ENCODE measurements at regions of chr6 and their contacts with region 1.

Region 1: DNA sequence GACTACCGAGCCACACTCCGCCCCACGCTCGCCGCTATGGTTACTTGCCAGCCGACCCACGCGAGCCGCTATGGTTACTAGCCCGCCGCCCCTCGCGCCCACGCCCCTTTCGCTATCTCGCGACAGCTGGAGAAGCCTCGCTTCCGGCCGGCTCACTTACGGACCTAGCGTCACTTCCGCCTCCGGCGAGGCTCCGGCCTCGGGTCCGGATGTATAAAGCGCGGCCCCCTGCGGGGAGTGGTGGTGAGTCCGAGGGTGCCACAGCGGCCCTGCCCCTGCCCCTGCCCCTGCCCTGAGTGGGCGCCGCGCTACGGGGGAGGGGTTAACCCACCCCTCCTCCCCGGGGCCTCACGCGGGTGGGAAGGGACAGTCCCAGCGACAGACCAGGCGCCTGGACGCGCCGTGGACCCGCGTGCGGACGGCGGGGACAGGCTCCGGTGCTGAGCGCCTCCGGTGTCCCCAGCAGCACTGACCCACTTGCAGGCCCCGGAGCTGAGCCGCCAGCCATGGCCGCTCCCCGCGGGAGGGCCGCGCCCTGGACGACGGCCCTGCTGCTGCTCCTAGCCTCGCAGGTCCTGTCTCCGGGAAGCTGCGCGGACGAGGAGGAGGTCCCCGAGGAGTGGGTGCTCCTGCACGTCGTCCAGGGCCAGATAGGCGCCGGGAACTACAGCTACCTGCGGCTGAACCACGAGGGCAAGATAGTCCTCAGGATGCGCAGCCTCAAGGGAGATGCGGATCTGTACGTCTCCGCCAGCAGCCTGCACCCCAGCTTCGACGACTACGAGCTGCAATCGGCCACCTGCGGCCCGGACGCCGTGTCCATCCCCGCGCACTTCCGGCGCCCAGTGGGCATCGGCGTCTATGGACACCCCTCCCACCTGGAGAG is at the starts of genes C6orf120 and WDR27:
- DNase-seq: peak; percentile 92 to 98 (median 96)
- ATAC-seq: peak; percentile 85
- H3K4me3 ChIP-seq: peak within 1 kb of the TSS; percentile 83
- H3K4me3 Mint-ChIP-seq: peak within 1 kb of the TSS; percentile 98
- H3K27ac ChIP-seq: peak within 1 kb of the TSS; percentile 87 to 92
- H3K27ac Mint-ChIP-seq: peak within 1 kb of the TSS; percentile 99
- H3K4me1 ChIP-seq: peaks cover 21% of the 10 kb centered on the region
- H3K4me1 Mint-ChIP-seq: peaks cover 74% of the 10 kb centered on the region
- H3K27me3 ChIP-seq: no peaks in the 10 kb centered on the region
- H3K27me3 Mint-ChIP-seq: no peaks in the 10 kb centered on the region
- CTCF ChIP-seq: no peak
- total RNA-seq, gene C6orf120: 19.7 to 21.3 TPM
- total RNA-seq, gene WDR27: 22.0 to 23.5 TPM

Region 2: GRCh38 chr6:169622627-169623363 is 79.4 kb before region 1 on chr6:
- CTCF ChIA-PET with region 1: no interaction called
- POLR2A ChIA-PET with region 1: no interaction called
- intact Hi-C with region 1: no loop called
- DNase-seq: no peak
- ATAC-seq: no peak
- H3K4me3 ChIP-seq: no peak overlapping the region
- H3K4me3 Mint-ChIP-seq: no peak overlapping the region
- H3K27ac ChIP-seq: no peak overlapping the region
- H3K27ac Mint-ChIP-seq: no peak overlapping the region
- H3K4me1 ChIP-seq: no peaks in the 10 kb centered on the region
- H3K4me1 Mint-ChIP-seq: no peaks in the 10 kb centered on the region
- H3K27me3 ChIP-seq: no peaks in the 10 kb centered on the region
- H3K27me3 Mint-ChIP-seq: no peaks in the 10 kb centered on the region
- CTCF ChIP-seq: no peak

Region 3: GRCh38 chr6:169654598-169655391 is 47.4 kb before region 1 on chr6:
- CTCF ChIA-PET with region 1: no interaction called
- POLR2A ChIA-PET with region 1: interaction called, 17 read pairs
- intact Hi-C with region 1: loop called in 1 of 2 experiments (anchors 5 kb)
- DNase-seq: peak; percentile 14 to 88 (median 66)
- ATAC-seq: peak; percentile 95
- H3K4me3 ChIP-seq: peak overlapping the region; percentile 74
- H3K4me3 Mint-ChIP-seq: peak overlapping the region; percentile 91
- H3K27ac ChIP-seq: peak overlapping the region; percentile 42 to 44
- H3K27ac Mint-ChIP-seq: peak overlapping the region; percentile 87
- H3K4me1 ChIP-seq: peaks cover 10% of the 10 kb centered on the region
- H3K4me1 Mint-ChIP-seq: peaks cover 18% of the 10 kb centered on the region
- H3K27me3 ChIP-seq: no peaks in the 10 kb centered on the region
- H3K27me3 Mint-ChIP-seq: no peaks in the 10 kb centered on the region
- CTCF ChIP-seq: no peak

Region 4: GRCh38 chr6:169751242-169752073 is 49.3 kb after region 1 on chr6 and contains the starts of genes DYNLT2 and ERMARD:
- CTCF ChIA-PET with region 1: interaction called, 6 read pairs
- POLR2A ChIA-PET with region 1: interaction called, 69 read pairs
- intact Hi-C with region 1: loop called (anchors 1 kb)
- DNase-seq: peak; percentile 85 to 96 (median 91)
- ATAC-seq: peak; percentile 93
- H3K4me3 ChIP-seq: peak within 1 kb of the TSS; percentile 87
- H3K4me3 Mint-ChIP-seq: peak within 1 kb of the TSS; percentile 99
- H3K27ac ChIP-seq: peak within 1 kb of the TSS; percentile 92 to 94
- H3K27ac Mint-ChIP-seq: peak within 1 kb of the TSS; percentile 100
- H3K4me1 ChIP-seq: peaks cover 14% of the 10 kb centered on the region
- H3K4me1 Mint-ChIP-seq: peaks cover 39% of the 10 kb centered on the region
- H3K27me3 ChIP-seq: no peaks in the 10 kb centered on the region
- H3K27me3 Mint-ChIP-seq: no peaks in the 10 kb centered on the region
- CTCF ChIP-seq: no peak
- total RNA-seq, gene DYNLT2: 4.1 to 4.3 TPM
- total RNA-seq, gene ERMARD: 24.2 to 26.2 TPM

Region 5: GRCh38 chr6:169780571-169781091 is 78.4 kb after region 1 on chr6:
- CTCF ChIA-PET with region 1: no interaction called
- POLR2A ChIA-PET with region 1: no interaction called
- intact Hi-C with region 1: no loop called
- DNase-seq: no peak
- ATAC-seq: no peak
- H3K4me3 ChIP-seq: no peak overlapping the region
- H3K4me3 Mint-ChIP-seq: no peak overlapping the region
- H3K27ac ChIP-seq: no peak overlapping the region
- H3K27ac Mint-ChIP-seq: no peak overlapping the region
- H3K4me1 ChIP-seq: no peaks in the 10 kb centered on the region
- H3K4me1 Mint-ChIP-seq: no peaks in the 10 kb centered on the region
- H3K27me3 ChIP-seq: no peaks in the 10 kb centered on the region
- H3K27me3 Mint-ChIP-seq: no peaks in the 10 kb centered on the region
- CTCF ChIP-seq: no peak

Region 6: DNA sequence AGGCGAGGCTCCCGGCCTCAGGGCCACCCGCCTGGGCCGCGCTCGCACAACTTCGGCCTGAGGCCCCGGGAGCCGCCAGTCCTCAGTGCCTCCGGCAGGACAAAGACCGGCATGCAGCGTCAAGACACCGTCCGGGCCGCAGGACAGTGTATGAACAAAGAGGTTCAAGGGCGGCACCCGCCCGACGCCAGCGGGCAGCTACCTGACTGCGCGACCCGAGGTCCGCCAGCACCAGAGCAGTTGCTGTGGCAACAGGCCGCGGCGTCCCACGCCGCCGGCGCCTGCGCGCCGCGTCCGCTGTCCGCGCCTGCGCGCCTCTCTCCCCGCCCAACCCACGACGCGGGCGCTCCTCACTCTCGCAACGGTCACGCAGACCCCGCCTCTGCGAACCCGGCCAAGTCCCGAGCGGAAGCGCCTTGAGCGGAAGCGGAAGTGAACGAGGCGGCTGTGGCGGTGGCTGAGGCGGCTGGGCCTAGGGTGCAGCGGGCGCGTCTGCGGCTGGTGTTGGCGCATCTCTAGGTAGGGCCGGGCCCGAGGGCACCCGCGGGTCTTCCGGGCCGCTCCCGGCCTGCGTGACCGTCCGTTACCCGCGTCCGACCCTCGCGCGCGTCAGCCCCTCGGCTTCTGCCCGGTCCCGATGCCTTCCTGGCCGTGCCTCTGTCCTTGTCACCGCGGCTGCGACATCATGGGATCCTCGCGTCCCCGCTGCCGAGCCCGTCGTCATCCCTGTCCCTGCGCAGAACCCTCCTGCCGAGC is 604.3 kb after region 1 on chr6 and contains the start of gene FAM120B:
- CTCF ChIA-PET with region 1: no interaction called
- POLR2A ChIA-PET with region 1: no interaction called
- intact Hi-C with region 1: loop called in 1 of 2 experiments (anchors 5 kb)
- DNase-seq: peak; percentile 91 to 99 (median 95)
- ATAC-seq: peak; percentile 95
- H3K4me3 ChIP-seq: peak within 1 kb of the TSS; percentile 91
- H3K4me3 Mint-ChIP-seq: peak within 1 kb of the TSS; percentile 93
- H3K27ac ChIP-seq: peak within 1 kb of the TSS; percentile 76 to 80
- H3K27ac Mint-ChIP-seq: peak within 1 kb of the TSS; percentile 87
- H3K4me1 ChIP-seq: peaks cover 37% of the 10 kb centered on the region
- H3K4me1 Mint-ChIP-seq: peaks cover 51% of the 10 kb centered on the region
- H3K27me3 ChIP-seq: no peaks in the 10 kb centered on the region
- H3K27me3 Mint-ChIP-seq: peaks cover 22% of the 10 kb centered on the region
- CTCF ChIP-seq: no peak
- total RNA-seq, gene FAM120B: 24.1 to 26.7 TPM

Region 7: DNA sequence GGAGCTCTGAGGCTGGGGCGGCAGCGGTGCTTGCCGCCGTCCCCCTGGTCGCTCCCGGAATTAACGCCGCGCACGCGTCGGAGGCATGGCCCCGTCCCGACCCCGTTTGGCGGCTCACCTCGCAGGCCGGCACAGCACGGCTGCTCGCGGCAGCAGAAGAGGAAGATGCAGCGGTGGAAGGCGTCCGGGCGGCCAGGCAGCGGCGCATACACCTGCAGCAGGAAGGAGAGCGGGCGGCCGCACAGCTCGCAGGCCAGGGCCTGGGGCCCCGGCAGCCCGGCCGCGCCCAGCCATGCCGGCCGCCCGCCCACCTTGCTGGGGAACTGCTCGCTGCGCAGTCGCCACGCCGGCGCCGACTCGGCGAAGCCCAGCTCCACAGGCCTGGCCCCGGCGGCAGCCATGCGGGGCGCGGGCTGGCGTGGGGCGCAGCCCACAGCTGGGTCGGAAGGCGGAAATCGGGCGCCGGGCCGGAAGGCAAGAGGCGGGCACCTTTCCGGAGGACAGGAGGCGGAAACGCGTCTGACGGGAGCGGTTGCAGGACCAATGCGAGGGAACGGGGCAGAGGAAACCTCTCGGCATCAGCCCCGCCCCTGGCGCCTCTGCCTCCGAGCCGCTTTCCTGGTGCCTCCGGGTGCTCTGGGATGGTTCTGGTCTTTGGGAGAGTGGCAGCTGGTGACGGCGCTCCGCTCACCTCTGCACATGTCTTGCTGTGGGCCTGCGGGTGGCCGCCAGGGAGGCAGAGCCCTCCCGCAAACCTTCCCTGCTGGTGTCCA is 882.2 kb after region 1 on chr6 and contains the start of gene PDCD2:
- CTCF ChIA-PET with region 1: interaction called, 3 read pairs
- POLR2A ChIA-PET with region 1: interaction called, 16 read pairs
- intact Hi-C with region 1: no loop called
- DNase-seq: peak; percentile 82 to 96 (median 88)
- ATAC-seq: peak; percentile 94
- H3K4me3 ChIP-seq: peak within 1 kb of the TSS; percentile 74
- H3K4me3 Mint-ChIP-seq: peak within 1 kb of the TSS; percentile 97
- H3K27ac ChIP-seq: peak within 1 kb of the TSS; percentile 69 to 92
- H3K27ac Mint-ChIP-seq: peak within 1 kb of the TSS; percentile 96
- H3K4me1 ChIP-seq: peaks cover 15% of the 10 kb centered on the region
- H3K4me1 Mint-ChIP-seq: peaks cover 38% of the 10 kb centered on the region
- H3K27me3 ChIP-seq: no peaks in the 10 kb centered on the region
- H3K27me3 Mint-ChIP-seq: no peaks in the 10 kb centered on the region
- CTCF ChIP-seq: no peak
- total RNA-seq, gene PDCD2: 56.9 to 57.1 TPM

Measured in CD4-positive, alpha-beta T cell (primary cell).